ENCODE measurements at regions of chr16 and their contacts with region 1.

Region 1: GRCh38 chr16:89860747-89861304 is 12.6 kb upstream of the TCF25 start:
- DNase-seq: peak; percentile 94
- H3K4me3 ChIP-seq: no peak overlapping the region
- H3K27ac ChIP-seq: no peak overlapping the region
- H3K4me1 ChIP-seq: peaks cover 13 to 42% (median 34%) of the 10 kb centered on the region in 6 donors
- H3K27me3 ChIP-seq: peaks cover 0 to 16% (median 0%) of the 10 kb centered on the region in 7 donors
- CTCF ChIP-seq: peak; percentile 95 to 98 (median 97)
- POLR2A ChIP-seq: no peak

Region 2: DNA sequence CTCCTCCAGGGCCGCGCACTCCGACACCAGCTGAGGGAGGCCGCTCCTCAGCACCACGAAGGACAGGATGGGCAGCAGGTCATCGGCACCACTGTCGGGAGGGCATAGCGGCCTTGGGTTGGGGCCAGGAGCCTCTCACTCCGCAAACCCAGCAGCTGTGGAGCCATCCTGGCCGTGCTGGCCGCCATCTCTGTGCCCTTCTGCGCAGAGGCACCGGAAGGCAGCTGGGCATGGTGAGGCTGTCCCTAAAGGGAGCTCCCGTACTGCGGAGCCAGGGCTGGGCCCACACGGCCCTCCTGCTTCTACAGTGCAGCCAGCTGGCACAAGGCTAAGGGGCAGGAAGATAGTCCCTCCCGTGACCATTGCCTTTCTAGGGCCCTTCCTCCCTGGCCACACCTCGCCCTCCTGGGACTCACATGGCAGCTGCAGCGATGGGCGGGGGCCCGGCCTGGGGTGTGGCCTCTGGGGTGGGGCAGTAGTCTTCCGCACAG is 152.3 kb before region 1 on chr16:
- intact Hi-C with region 1: loop called (anchors 5 kb)
- DNase-seq: no peak
- H3K4me3 ChIP-seq: no peak overlapping the region
- H3K27ac ChIP-seq: no peak overlapping the region
- H3K4me1 ChIP-seq: peaks cover 11 to 57% (median 27%) of the 10 kb centered on the region in 6 donors
- H3K27me3 ChIP-seq: peaks cover 0 to 15% (median 0%) of the 10 kb centered on the region in 7 donors
- CTCF ChIP-seq: no peak
- POLR2A ChIP-seq: no peak

Region 3: DNA sequence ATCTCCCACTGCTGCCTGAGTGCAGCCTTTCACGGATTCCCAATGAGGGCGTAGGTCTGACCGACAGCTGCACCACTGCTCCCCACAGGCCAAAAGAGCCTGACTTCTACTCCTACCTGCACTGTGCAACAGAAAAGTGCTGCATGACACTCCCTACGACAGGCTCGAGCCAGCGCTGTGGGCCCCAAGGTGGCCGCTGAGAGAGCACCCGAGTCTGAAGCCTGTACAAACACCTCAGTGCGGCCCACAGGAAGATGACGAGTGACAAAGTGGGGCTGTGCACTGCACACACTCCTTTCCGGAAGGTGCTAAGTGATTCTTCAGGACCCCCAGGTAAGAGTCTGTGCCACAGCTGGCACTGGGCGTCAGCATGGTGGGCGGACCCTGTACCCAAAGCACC is 85.6 kb before region 1 on chr16:
- intact Hi-C with region 1: no loop called
- DNase-seq: no peak
- H3K4me3 ChIP-seq: no peak overlapping the region
- H3K27ac ChIP-seq: no peak overlapping the region
- H3K4me1 ChIP-seq: no peaks in the 10 kb centered on the region
- H3K27me3 ChIP-seq: no peaks in the 10 kb centered on the region
- CTCF ChIP-seq: no peak
- POLR2A ChIP-seq: no peak

Region 4: DNA sequence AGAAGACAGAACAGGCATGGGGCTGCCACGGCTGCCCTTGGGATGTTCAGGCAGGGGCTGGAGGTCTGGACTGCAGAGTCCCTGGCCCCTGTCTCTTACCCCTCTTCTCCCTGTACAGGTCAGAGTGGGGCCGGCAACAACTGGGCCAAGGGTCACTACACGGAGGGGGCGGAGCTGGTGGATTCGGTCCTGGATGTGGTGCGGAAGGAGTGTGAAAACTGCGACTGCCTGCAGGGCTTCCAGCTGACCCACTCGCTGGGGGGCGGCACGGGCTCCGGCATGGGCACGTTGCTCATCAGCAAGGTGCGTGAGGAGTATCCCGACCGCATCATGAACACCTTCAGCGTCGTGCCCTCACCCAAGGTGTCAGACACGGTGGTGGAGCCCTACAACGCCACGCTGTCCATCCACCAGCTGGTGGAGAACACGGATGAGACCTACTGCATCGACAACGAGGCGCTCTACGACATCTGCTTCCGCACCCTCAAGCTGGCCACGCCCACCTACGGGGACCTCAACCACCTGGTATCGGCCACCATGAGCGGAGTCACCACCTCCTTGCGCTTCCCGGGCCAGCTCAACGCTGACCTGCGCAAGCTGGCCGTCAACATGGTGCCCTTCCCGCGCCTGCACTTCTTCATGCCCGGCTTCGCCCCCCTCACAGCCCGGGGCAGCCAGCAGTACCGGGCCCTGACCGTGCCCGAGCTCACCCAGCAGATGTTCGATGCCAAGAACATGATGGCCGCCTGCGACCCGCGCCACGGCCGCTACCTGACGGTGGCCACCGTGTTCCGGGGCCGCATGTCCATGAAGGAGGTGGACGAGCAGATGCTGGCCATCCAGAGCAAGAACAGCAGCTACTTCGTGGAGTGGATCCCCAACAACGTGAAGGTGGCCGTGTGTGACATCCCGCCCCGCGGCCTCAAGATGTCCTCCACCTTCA is 74.1 kb after region 1 on chr16:
- intact Hi-C with region 1: no loop called
- DNase-seq: no peak
- H3K4me3 ChIP-seq: no peak overlapping the region
- H3K27ac ChIP-seq: no peak overlapping the region
- H3K4me1 ChIP-seq: peaks cover 0 to 5% (median 0%) of the 10 kb centered on the region in 6 donors
- H3K27me3 ChIP-seq: peaks cover 0 to 39% (median 0%) of the 10 kb centered on the region in 7 donors
- CTCF ChIP-seq: no peak
- POLR2A ChIP-seq: no peak

Measured in spleen (tissue), 13 donors.